SK-N-SH (cell line): ENCODE measurements at regions of chr4 and their contacts with region 1.

Region 1: GRCh38 chr4:87679449-87680169 is 29.5 kb downstream of the DMP1 start:
- DNase-seq: peak; percentile 59
- H3K4me3 ChIP-seq: no peak overlapping the region
- H3K27ac ChIP-seq: no peak overlapping the region
- H3K4me1 ChIP-seq: no peaks in the 10 kb centered on the region
- H3K27me3 ChIP-seq: no peaks in the 10 kb centered on the region
- CTCF ChIP-seq: peak; percentile 90
- EP300 ChIP-seq: no peak
- RAD21 ChIP-seq: peak; percentile 91

Region 2: DNA sequence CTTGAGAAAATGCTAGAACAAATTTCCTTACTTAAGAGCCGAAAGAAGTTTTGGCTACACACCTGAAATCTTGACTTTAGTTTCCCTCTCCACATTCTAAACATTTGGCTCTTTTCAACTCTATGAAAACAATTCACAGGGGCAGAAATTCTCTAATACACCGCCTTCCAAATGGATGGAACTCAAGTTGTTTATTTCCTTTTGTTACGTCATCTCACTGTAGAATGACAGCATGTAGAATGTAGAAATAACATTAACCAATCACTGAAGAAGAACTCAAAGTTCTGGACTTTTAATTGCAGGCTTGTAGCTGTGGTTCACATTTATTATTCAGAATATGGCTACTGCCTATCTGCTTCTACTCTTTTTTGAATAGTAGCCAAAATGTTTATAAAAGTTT is 27.7 kb before region 1 on chr4:
- CTCF ChIA-PET with region 1: no interaction called
- POLR2A ChIA-PET with region 1: no interaction called
- DNase-seq: no peak
- H3K4me3 ChIP-seq: no peak overlapping the region
- H3K27ac ChIP-seq: no peak overlapping the region
- H3K4me1 ChIP-seq: no peaks in the 10 kb centered on the region
- H3K27me3 ChIP-seq: no peaks in the 10 kb centered on the region
- CTCF ChIP-seq: no peak
- EP300 ChIP-seq: no peak
- RAD21 ChIP-seq: no peak

Region 3: DNA sequence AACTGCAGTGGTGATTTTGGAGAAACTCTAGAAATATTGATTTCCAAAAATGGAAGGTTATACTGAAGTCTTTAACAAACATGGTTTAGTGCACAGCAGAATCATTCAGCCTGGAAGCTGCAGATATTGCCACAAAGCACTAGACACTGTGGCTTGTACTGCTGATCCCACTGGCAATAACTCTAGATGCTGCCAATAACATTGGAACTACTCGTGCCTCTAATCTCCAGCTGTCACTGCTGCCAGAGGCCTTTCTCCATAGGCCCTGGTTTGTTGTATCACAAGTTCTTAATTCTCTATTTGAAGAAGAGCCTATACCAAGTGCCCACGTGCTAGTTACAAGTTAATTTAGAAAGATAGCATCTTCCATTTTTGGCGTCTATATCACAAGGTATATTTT is 10.2 kb before region 1 on chr4:
- CTCF ChIA-PET with region 1: interaction called, 27 read pairs
- POLR2A ChIA-PET with region 1: no interaction called
- DNase-seq: no peak
- H3K4me3 ChIP-seq: no peak overlapping the region
- H3K27ac ChIP-seq: no peak overlapping the region
- H3K4me1 ChIP-seq: no peaks in the 10 kb centered on the region
- H3K27me3 ChIP-seq: no peaks in the 10 kb centered on the region
- CTCF ChIP-seq: no peak
- EP300 ChIP-seq: no peak
- RAD21 ChIP-seq: no peak

Region 4: DNA sequence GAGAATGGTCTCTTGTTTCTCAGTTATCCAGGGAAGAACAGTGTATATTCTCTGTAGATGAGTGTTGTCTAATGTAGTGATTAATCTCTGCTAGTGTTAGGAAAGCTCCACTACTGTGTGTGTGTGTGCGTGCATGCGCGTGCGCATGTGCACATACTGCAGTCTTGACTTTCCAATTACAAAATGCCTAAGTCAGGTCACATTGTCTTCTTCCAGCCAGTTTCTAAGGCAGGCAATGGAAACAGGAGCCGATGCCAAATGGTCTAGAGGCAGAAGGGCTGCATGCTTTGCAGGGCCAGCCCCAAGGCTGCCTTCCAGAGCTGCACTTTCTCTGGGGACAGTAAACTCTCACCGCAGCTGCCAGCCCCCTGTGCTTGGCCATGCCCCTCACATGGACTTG is 1048.5 kb after region 1 on chr4:
- CTCF ChIA-PET with region 1: no interaction called
- POLR2A ChIA-PET with region 1: no interaction called
- DNase-seq: no peak
- H3K4me3 ChIP-seq: no peak overlapping the region
- H3K27ac ChIP-seq: no peak overlapping the region
- H3K4me1 ChIP-seq: peaks cover 0 to 5% of the 10 kb centered on the region in 2 experiments; a peak in 1 of 4 replicates
- H3K27me3 ChIP-seq: no peaks in the 10 kb centered on the region
- CTCF ChIP-seq: no peak
- EP300 ChIP-seq: no peak
- RAD21 ChIP-seq: no peak